HEK293 (cell line): ENCODE measurements at regions of chr17 and their contacts with region 1.

Region 1: DNA sequence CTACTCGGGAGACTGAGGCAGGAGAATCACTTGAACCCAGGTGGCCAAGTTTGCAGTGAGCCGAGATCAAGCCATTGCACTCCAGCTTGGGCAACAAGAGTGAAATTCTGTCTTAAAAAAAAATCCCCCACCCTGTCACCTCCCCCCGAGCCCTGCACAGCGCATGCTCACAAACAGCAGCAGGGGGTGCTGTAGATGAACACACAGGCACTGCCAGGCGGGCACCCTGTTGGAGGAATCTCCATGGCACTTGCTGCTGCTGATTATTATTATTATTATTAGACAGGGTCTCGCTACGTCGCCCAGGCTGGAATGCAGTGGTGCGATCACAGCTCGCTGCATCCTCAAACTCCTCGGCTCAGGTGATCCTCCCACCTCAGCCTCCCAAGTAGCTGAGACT is 24.6 kb downstream of the FZD2 start:
- H3K4me3 ChIP-seq: no peak overlapping the region
- H3K27ac ChIP-seq: no peak overlapping the region
- H3K4me1 ChIP-seq: no peaks in the 10 kb centered on the region
- CTCF ChIP-seq: no peak

Region 2: DNA sequence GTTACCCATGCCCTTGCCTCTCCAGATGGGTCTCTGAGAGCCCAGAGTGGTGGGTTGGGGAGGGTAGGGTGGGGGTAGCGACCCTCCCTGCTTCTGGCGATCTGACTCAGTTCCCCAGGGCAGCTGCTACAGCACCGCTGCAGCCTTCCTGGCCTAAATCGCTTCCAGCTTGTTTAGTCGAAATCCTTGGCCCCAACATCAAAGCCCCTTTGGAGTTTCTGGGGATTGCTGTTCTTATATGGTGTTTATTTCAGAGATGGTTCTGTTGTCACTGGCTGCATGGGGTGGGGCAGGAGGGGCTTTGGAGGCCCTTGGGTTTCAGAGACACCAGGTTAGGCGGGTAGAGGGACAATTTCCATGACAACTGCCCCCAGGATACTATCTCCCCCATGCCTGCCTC is 11.3 kb after region 1 on chr17:
- CTCF ChIA-PET with region 1: interaction called, 10 read pairs
- POLR2A ChIA-PET with region 1: no interaction called
- H3K4me3 ChIP-seq: no peak overlapping the region
- H3K27ac ChIP-seq: no peak overlapping the region
- H3K4me1 ChIP-seq: no peaks in the 10 kb centered on the region
- CTCF ChIP-seq: no peak

Region 3: DNA sequence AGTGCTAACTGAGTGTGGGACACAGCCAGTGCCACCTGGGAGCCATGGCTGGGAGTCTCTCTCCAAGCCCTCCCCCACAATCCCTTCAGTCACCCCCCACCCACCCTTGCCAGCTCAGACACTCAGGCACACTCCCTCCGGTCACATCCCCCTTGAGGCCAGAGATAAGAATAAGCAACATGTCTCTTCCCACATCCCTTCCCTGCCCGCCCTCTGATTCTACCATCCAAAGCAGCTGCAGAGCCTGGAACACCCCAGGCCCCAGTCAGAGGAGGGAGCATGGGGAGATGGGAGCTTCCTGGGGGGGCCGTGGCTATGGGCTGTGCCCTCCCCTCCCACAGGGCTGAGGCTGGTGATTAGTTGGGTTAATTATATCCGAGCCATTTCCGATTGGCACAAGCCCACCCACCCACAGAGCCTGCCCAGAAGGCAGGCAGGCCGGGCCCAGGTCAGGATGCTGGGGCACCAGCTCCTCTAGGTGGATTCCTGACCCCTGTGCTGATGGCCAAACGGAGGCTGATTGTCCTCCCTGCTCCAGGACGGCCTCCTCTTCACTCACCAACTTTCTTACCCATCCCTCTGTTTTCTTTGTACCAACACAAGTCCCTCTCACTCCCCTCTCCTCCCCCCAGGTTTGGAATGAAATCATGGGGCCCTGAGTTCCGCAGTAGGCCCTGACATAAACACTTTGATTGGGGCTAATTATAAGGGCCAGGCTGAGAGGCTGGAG is 45.8 kb after region 1 on chr17:
- CTCF ChIA-PET with region 1: interaction called, 12 read pairs
- POLR2A ChIA-PET with region 1: no interaction called
- H3K4me3 ChIP-seq: no peak overlapping the region
- H3K27ac ChIP-seq: no peak overlapping the region
- H3K4me1 ChIP-seq: no peaks in the 10 kb centered on the region
- CTCF ChIP-seq: no peak